Endothelial cell of umbilical vein (primary cell): ENCODE measurements at regions of chr17 and their contacts with region 1.

Region 1: GRCh38 chr17:61837175-61838051 is 25.9 kb downstream of the BRIP1 start:
- DNase-seq: peak; percentile 76
- H3K4me3 ChIP-seq: no peak overlapping the region
- H3K27ac ChIP-seq: no peak overlapping the region
- H3K4me1 ChIP-seq: peaks cover 4% of the 10 kb centered on the region
- H3K27me3 ChIP-seq: no peaks in the 10 kb centered on the region
- CTCF ChIP-seq: peak; percentile 64 to 65
- POLR2A ChIP-seq: no peak

Region 2: GRCh38 chr17:61251939-61252896 is 585.2 kb before region 1 on chr17:
- CTCF ChIA-PET with region 1: no interaction called
- POLR2A ChIA-PET with region 1: no interaction called
- dilution Hi-C with region 1: no loop called
- intact Hi-C with region 1: no loop called
- DNase-seq: peak; percentile 88
- H3K4me3 ChIP-seq: no peak overlapping the region
- H3K27ac ChIP-seq: no peak overlapping the region
- H3K4me1 ChIP-seq: peaks cover 14% of the 10 kb centered on the region
- H3K27me3 ChIP-seq: peaks cover 3 to 6% of the 10 kb centered on the region in 2 experiments
- CTCF ChIP-seq: no peak
- POLR2A ChIP-seq: no peak

Region 3: DNA sequence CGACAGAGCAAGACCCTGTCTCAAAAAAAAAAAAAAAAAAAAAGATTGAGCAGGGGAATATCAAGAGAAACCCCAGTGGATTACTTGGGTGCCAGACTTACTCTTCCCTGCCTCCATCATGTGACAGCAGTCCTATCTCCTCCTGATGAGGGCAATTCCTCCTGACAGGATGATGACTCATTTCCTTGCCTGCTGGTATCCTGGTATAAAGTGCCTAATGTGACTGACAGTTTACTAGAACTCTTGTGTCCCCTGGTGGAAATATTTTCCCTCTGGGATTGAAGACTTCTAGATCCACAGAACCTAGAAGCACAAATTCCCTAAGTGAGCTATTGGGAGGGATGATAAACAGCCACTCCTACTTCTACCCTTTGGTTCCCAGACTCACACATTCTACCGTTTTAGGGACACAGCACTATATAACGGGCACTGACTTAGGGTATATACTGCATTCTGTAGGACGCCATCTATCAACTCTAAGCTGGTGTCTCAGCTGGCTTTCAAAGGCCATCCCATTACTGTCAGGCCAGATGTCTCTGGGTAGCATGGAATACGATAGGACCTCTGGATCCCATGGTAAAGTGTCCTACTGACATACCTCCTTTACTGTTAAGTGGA is 342.2 kb after region 1 on chr17:
- CTCF ChIA-PET with region 1: interaction called, 3 read pairs
- POLR2A ChIA-PET with region 1: no interaction called
- dilution Hi-C with region 1: no loop called
- intact Hi-C with region 1: loop called (anchors 5 kb)
- DNase-seq: peak; percentile 80
- H3K4me3 ChIP-seq: no peak overlapping the region
- H3K27ac ChIP-seq: no peak overlapping the region
- H3K4me1 ChIP-seq: peaks cover 17% of the 10 kb centered on the region
- H3K27me3 ChIP-seq: no peaks in the 10 kb centered on the region
- CTCF ChIP-seq: peak; percentile 7 to 19
- POLR2A ChIP-seq: no peak